ENCODE measurements at regions of chr1 and their contacts with region 1.

Region 1: GRCh38 chr1:86833461-86834215 is 80.3 kb downstream of the SELENOF start:
- DNase-seq: peak; percentile 62
- ATAC-seq: peak; percentile 95

Region 2: GRCh38 chr1:86965012-86965826 is 131.6 kb after region 1 on chr1:
- intact Hi-C with region 1: loop called (anchors 5 kb)
- DNase-seq: no peak
- ATAC-seq: peak; percentile 52

Region 3: DNA sequence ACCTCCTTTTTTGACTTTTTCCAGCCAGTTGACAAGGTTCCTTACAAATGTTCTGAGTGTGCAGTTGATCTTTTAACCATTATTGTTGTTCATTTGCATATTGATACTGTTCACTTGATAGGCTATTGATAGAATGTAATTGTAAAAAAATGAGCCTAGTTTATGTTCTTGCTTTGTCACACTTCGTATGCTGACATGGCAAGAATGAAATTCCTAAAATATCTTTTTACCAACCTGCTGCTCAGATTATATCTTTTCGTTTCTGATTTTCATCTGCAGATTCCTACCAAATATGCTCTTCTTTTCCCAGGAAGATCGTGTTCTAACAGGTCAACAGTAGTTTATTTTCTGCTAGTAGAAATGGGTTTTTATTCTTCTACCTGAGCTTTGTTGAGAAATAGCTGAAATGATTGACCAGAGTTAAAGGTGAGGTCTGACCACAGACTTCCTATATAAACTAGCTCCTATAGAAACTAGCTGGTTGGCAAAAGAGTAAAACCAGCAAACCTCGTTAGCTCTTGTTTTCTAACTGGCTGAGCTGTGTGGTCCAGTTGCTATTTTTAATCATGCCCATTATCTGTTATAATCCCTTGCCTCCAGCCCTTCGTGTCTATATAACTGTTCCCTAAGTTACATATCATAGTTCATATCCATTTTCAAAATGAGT is 255.6 kb after region 1 on chr1:
- intact Hi-C with region 1: loop called (anchors 5 kb)
- DNase-seq: no peak
- ATAC-seq: no peak